Naive thymus-derived CD4-positive, alpha-beta T cell (primary cell): ENCODE measurements at regions of chr1 and their contacts with region 1.

Region 1: GRCh38 chr1:84433258-84434080 is 35.2 kb downstream of the DNASE2B start:
- DNase-seq: peak in 7 of 9 donors; percentile 71 to 85 (median 79)
- ATAC-seq: peak; percentile 92
- H3K4me3 ChIP-seq: peak overlapping the region; percentile 34
- H3K4me3 Mint-ChIP-seq: peak overlapping the region in 9 of 10 donors; percentile 29 to 82 (median 77)
- H3K27ac ChIP-seq: peak overlapping the region; percentile 73
- H3K27ac Mint-ChIP-seq: peak overlapping the region in 2 of 9 donors; percentile 85 to 90
- H3K4me1 ChIP-seq: peaks cover 23 to 41% of the 10 kb centered on the region in 2 donors
- H3K4me1 Mint-ChIP-seq: peaks cover 0 to 12% (median 9%) of the 10 kb centered on the region in 7 donors
- H3K27me3 ChIP-seq: no peaks in the 10 kb centered on the region
- H3K27me3 Mint-ChIP-seq: no peaks in the 10 kb centered on the region

Region 2: DNA sequence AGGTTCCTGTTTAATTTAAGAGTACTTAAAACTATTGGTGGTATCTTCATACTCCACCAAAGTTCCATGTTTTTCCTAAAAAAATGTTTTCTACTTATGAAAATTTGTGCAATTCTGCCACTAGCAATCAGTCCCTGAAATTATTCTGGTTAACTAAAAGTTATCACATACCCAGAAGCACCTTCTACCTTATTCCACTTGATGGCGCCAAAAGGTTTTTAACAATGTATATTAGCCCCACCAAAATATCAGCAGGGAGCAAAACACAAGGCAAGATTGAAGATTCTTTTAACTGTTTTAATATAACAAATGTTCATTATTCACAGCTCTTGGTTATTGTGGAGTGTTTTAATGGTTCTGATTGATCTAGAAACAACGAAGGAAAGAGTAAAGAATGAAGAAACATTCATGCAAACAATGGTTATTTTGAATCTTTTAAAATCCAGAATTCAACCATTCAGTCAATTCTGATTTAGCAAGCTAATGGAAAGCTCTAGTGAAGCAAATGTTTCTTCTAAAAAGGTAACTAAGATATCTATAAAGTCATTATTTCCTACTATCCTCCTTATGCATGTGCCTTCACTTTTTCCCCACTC is 501.7 kb before region 1 on chr1:
- CTCF ChIA-PET with region 1: interaction called, 5 read pairs
- POLR2A ChIA-PET with region 1: no interaction called
- intact Hi-C with region 1: loop called (anchors 1 kb)
- DNase-seq: peak in 7 of 9 donors; percentile 18 to 60 (median 45)
- ATAC-seq: peak; percentile 79
- H3K4me3 ChIP-seq: no peak overlapping the region
- H3K4me3 Mint-ChIP-seq: no peak overlapping the region
- H3K27ac ChIP-seq: no peak overlapping the region
- H3K27ac Mint-ChIP-seq: no peak overlapping the region
- H3K4me1 ChIP-seq: no peaks in the 10 kb centered on the region
- H3K4me1 Mint-ChIP-seq: no peaks in the 10 kb centered on the region
- H3K27me3 ChIP-seq: no peaks in the 10 kb centered on the region
- H3K27me3 Mint-ChIP-seq: peaks cover 4 to 19% (median 7%) of the 10 kb centered on the region in 5 donors

Region 3: GRCh38 chr1:84298328-84298683 is 135.2 kb before region 1 on chr1:
- CTCF ChIA-PET with region 1: interaction called, 4 read pairs
- POLR2A ChIA-PET with region 1: interaction called, 4 read pairs
- intact Hi-C with region 1: loop called (anchors 1 to 2 kb)
- DNase-seq: peak; percentile 40 to 65 (median 46)
- ATAC-seq: peak; percentile 88
- H3K4me3 ChIP-seq: peak overlapping the region; percentile 92
- H3K4me3 Mint-ChIP-seq: peak overlapping the region; percentile 83 to 95 (median 90)
- H3K27ac ChIP-seq: peak overlapping the region; percentile 69
- H3K27ac Mint-ChIP-seq: peak overlapping the region; percentile 67 to 85 (median 79)
- H3K4me1 ChIP-seq: peaks cover 4 to 25% of the 10 kb centered on the region in 2 donors
- H3K4me1 Mint-ChIP-seq: peaks cover 17 to 52% (median 42%) of the 10 kb centered on the region in 7 donors
- H3K27me3 ChIP-seq: no peaks in the 10 kb centered on the region
- H3K27me3 Mint-ChIP-seq: peaks cover 0 to 16% (median 6%) of the 10 kb centered on the region in 5 donors

Region 4: DNA sequence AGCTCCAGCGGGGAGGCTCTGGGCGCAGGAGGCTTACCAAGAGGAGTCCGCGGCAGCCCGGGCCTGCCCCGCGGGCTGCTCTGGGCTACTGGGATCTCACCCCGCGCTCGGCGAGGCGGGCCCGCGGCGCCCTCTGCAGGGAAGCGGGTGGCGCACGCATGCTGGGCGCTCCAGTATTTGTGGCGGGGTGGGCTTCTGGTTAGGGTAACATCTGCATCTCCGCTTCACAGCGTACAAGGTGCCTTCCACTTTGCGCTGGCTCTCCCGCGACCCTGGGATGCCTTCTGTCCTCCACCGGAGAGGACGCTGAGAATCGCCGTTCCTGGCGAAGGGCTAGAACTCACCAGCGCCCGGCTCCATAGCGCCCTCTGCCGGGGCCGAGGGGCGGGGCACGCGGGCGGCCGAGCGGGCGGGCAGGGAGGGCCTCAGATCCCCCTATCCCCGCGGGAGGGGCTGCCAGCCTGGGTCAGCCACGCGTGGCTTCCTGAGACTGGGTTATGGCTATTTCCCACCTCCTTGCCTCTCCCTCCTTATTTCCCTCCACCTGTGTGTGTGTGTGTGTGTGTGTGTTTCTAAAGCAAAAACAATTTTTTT is 187.3 kb after region 1 on chr1:
- CTCF ChIA-PET with region 1: interaction called, 7 read pairs
- POLR2A ChIA-PET with region 1: interaction called, 4 read pairs
- intact Hi-C with region 1: loop called (anchors 1 to 2 kb)
- DNase-seq: peak; percentile 60 to 95 (median 84)
- ATAC-seq: peak; percentile 96
- H3K4me3 ChIP-seq: peak overlapping the region; percentile 85
- H3K4me3 Mint-ChIP-seq: peak overlapping the region; percentile 85 to 97 (median 92)
- H3K27ac ChIP-seq: peak overlapping the region; percentile 68
- H3K27ac Mint-ChIP-seq: peak overlapping the region in 6 of 9 donors; percentile 53 to 89 (median 82)
- H3K4me1 ChIP-seq: peaks cover 0 to 3% of the 10 kb centered on the region in 2 donors
- H3K4me1 Mint-ChIP-seq: peaks cover 0 to 18% (median 5%) of the 10 kb centered on the region in 7 donors
- H3K27me3 ChIP-seq: no peaks in the 10 kb centered on the region
- H3K27me3 Mint-ChIP-seq: peaks cover 0 to 7% (median 0%) of the 10 kb centered on the region in 5 donors

Region 5: DNA sequence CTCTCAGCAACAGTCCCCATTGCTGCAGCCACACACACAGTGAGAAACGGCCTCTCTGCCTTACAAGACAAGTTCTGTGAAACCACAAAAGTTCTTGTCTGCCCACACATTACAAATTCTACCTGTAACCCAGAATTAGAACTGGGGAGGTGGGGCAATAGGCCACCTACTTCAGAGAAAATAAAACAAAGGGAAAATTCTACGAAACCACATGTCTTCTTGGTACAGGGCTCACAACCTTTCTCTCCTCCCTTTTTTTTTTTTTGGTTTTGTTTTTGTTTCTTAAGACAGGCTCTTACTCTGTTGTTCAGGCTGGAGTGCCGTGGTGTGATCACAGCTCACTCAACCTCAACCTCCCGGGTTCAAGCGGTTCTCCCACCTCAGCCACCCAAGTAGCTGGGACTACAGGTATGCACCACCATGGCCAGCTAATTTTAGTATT is 429.4 kb after region 1 on chr1:
- CTCF ChIA-PET with region 1: no interaction called
- POLR2A ChIA-PET with region 1: no interaction called
- intact Hi-C with region 1: loop called (anchors 5 to 10 kb)
- DNase-seq: peak in 8 of 9 donors; percentile 42 to 81 (median 66)
- ATAC-seq: peak; percentile 87
- H3K4me3 ChIP-seq: peak overlapping the region; percentile 44
- H3K4me3 Mint-ChIP-seq: peak overlapping the region; percentile 71 to 89 (median 83)
- H3K27ac ChIP-seq: peak overlapping the region; percentile 67
- H3K27ac Mint-ChIP-seq: peak overlapping the region; percentile 83 to 95 (median 92)
- H3K4me1 ChIP-seq: peaks cover 30 to 46% of the 10 kb centered on the region in 2 donors
- H3K4me1 Mint-ChIP-seq: peaks cover 31 to 69% (median 59%) of the 10 kb centered on the region in 7 donors
- H3K27me3 ChIP-seq: no peaks in the 10 kb centered on the region
- H3K27me3 Mint-ChIP-seq: peaks cover 0 to 6% (median 0%) of the 10 kb centered on the region in 5 donors